Ascending aorta (tissue), 2 donors: ENCODE measurements at regions of chr10 and their contacts with region 1.

Region 1: GRCh38 chr10:59709395-59710125 is at the start of gene SLC16A9:
- DNase-seq: peak in 1 of 2 donors; percentile 75
- H3K4me3 ChIP-seq: peak within 1 kb of the TSS; percentile 75 to 84
- H3K27ac ChIP-seq: peak within 1 kb of the TSS; percentile 83 to 85
- H3K4me1 ChIP-seq: peaks cover 4 to 17% of the 10 kb centered on the region in 2 donors
- H3K27me3 ChIP-seq: no peaks in the 10 kb centered on the region
- CTCF ChIP-seq: peak in 2 of 3 experiments; percentile 40 to 50
- total RNA-seq, gene SLC16A9: 2.9 TPM

Region 2: GRCh38 chr10:59654007-59654406 is 55.6 kb before region 1 on chr10:
- intact Hi-C with region 1: loop called (anchors 5 kb)
- DNase-seq: no peak
- H3K4me3 ChIP-seq: no peak overlapping the region
- H3K27ac ChIP-seq: peak overlapping the region; percentile 10 to 34
- H3K4me1 ChIP-seq: peaks cover 3 to 21% of the 10 kb centered on the region in 2 donors
- H3K27me3 ChIP-seq: no peaks in the 10 kb centered on the region
- CTCF ChIP-seq: no peak

Region 3: GRCh38 chr10:59808896-59809643 is 99.5 kb after region 1 on chr10:
- intact Hi-C with region 1: loop called (anchors 2 kb)
- DNase-seq: peak in 1 of 2 donors; percentile 84
- H3K4me3 ChIP-seq: no peak overlapping the region
- H3K27ac ChIP-seq: peak overlapping the region; percentile 15 to 66
- H3K4me1 ChIP-seq: peaks cover 12 to 22% of the 10 kb centered on the region in 2 donors
- H3K27me3 ChIP-seq: no peaks in the 10 kb centered on the region
- CTCF ChIP-seq: peak; percentile 9 to 54 (median 51)